ENCODE measurements at regions of chr9 and their contacts with region 1.

Region 1: DNA sequence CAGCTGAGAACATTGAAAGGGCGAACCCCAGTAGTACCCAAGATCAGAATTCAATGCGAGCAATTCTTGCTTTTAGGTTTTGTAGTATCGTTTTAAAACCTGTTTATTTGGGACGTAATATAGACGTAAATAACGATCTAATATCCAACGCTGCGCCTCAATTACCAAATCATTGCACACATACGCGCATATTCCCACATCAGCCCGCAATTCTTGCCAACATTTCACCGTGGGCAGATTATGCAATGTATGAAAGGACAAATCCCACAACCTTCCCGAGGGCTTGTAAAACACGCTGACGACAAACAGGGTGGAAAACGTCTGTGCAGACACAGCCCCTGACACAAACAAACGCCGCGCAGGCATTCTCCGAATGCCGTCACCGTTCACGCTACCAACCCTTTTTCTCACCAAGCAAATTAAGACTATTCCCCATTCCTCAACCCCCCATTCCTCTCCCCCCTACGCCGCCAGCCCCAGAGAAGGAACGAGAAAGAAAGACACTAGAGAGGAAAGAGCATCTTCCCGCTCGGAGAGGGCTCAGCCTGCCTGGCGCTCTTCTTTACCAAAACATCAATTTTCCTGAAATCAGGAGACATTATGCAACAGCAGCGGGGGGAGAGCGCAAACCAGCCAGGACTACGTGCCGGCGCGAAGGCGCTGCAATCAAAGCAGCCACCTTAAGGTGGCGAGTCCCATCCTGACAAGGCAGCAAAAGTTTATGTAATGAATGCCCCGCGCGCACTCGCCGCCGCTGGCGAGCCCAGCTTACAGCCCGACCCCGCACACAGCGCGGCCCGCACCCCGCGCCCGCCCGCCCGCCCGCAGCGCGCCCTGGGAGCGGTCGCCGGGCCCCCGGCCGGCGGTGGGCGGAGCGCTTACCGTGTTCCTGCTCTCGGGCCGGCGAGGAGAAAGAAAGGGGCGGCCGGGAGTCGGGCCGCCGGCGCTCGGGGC is 597 bp downstream of the NFIL3 start:
- DNase-seq: peak; percentile 51
- H3K4me3 Mint-ChIP-seq: peak overlapping the region; percentile 98
- H3K27ac Mint-ChIP-seq: peak overlapping the region; percentile 96
- H3K4me1 Mint-ChIP-seq: peaks cover 63% of the 10 kb centered on the region
- H3K27me3 Mint-ChIP-seq: peaks cover 1% of the 10 kb centered on the region

Region 2: GRCh38 chr9:89428901-89429890 is 1993.8 kb before region 1 on chr9:
- intact Hi-C with region 1: loop called (anchors 10 kb)
- DNase-seq: no peak
- H3K4me3 Mint-ChIP-seq: no peak overlapping the region
- H3K27ac Mint-ChIP-seq: peak overlapping the region; percentile 100
- H3K4me1 Mint-ChIP-seq: peaks cover 91% of the 10 kb centered on the region
- H3K27me3 Mint-ChIP-seq: no peaks in the 10 kb centered on the region

Region 3: GRCh38 chr9:91036826-91037510 is 386.1 kb before region 1 on chr9:
- intact Hi-C with region 1: loop called (anchors 1 kb)
- DNase-seq: peak; percentile 69
- H3K4me3 Mint-ChIP-seq: peak overlapping the region; percentile 35
- H3K27ac Mint-ChIP-seq: peak overlapping the region; percentile 70
- H3K4me1 Mint-ChIP-seq: peaks cover 61% of the 10 kb centered on the region
- H3K27me3 Mint-ChIP-seq: peaks cover 3% of the 10 kb centered on the region

Region 4: DNA sequence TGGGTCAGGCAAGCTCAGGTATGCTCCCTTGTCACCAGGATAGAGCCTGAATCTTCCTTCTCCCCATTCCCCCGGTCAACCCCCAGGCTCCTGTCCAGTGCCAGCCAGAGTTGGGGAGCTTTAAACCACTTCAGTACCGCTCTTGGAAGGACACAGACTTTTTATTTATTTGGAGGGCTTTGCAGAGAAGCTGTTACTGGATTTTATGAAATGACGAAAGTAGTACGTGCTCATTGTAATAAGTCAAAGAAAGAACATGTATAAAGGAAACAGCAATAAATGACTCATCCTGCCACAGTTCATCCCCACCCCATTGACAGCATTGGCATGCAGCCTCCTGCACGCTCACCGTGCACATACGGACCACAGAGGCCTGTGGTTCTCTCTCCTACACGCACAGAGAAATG is 291.6 kb before region 1 on chr9:
- intact Hi-C with region 1: loop called (anchors 1 kb)
- DNase-seq: peak; percentile 70
- H3K4me3 Mint-ChIP-seq: peak overlapping the region; percentile 63
- H3K27ac Mint-ChIP-seq: peak overlapping the region; percentile 96
- H3K4me1 Mint-ChIP-seq: peaks cover 42% of the 10 kb centered on the region
- H3K27me3 Mint-ChIP-seq: no peaks in the 10 kb centered on the region

Region 5: DNA sequence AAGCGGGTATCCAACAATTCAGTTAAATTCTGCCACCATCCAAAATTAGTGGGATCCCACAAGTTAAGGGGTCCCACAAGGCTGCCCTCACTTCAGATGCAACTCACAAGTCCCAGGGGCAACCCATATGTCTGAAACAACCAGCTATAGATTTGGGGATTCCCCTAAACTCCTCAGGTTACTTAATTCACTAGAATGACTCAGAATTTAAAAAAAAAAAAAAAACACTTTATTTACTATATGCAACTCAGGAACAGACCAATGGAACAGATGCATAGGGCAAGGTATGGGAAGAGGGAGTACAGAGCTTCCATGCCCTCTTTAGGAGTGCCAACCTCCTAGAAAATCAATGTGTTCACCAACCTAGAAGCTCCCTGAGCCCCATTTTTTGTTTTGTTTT is 76.4 kb before region 1 on chr9:
- intact Hi-C with region 1: loop called (anchors 1 kb)
- DNase-seq: no peak
- H3K4me3 Mint-ChIP-seq: no peak overlapping the region
- H3K27ac Mint-ChIP-seq: peak overlapping the region; percentile 67
- H3K4me1 Mint-ChIP-seq: peaks cover 56% of the 10 kb centered on the region
- H3K27me3 Mint-ChIP-seq: no peaks in the 10 kb centered on the region

Region 6: GRCh38 chr9:91647371-91647770 is 224.3 kb after region 1 on chr9:
- intact Hi-C with region 1: no loop called
- DNase-seq: no peak
- H3K4me3 Mint-ChIP-seq: no peak overlapping the region
- H3K27ac Mint-ChIP-seq: no peak overlapping the region
- H3K4me1 Mint-ChIP-seq: no peaks in the 10 kb centered on the region
- H3K27me3 Mint-ChIP-seq: peaks cover 10% of the 10 kb centered on the region

Region 7: GRCh38 chr9:91681461-91682305 is 258.6 kb after region 1 on chr9:
- intact Hi-C with region 1: loop called (anchors 5 kb)
- DNase-seq: peak; percentile 57
- H3K4me3 Mint-ChIP-seq: peak overlapping the region; percentile 53
- H3K27ac Mint-ChIP-seq: no peak overlapping the region
- H3K4me1 Mint-ChIP-seq: peaks cover 5% of the 10 kb centered on the region
- H3K27me3 Mint-ChIP-seq: peaks cover 27% of the 10 kb centered on the region